ENCODE measurements at regions of chr18 and their contacts with region 1.

Region 1: GRCh38 chr18:9334329-9334972 is at the start of gene TWSG1:
- H3K4me3 Mint-ChIP-seq: peak within 1 kb of the TSS; percentile 87
- H3K27ac Mint-ChIP-seq: peak within 1 kb of the TSS; percentile 89
- H3K4me1 Mint-ChIP-seq: peaks cover 28% of the 10 kb centered on the region
- H3K27me3 Mint-ChIP-seq: peaks cover 5% of the 10 kb centered on the region

Region 2: GRCh38 chr18:8704361-8705279 is 629.8 kb before region 1 on chr18:
- intact Hi-C with region 1: loop called (anchors 10 kb)
- H3K4me3 Mint-ChIP-seq: peak overlapping the region; percentile 92
- H3K27ac Mint-ChIP-seq: peak overlapping the region; percentile 91
- H3K4me1 Mint-ChIP-seq: peaks cover 70% of the 10 kb centered on the region
- H3K27me3 Mint-ChIP-seq: peaks cover 51% of the 10 kb centered on the region

Region 3: GRCh38 chr18:9082711-9083510 is 251.5 kb before region 1 on chr18:
- intact Hi-C with region 1: loop called (anchors 10 kb)
- H3K4me3 Mint-ChIP-seq: peak overlapping the region; percentile 34
- H3K27ac Mint-ChIP-seq: peak overlapping the region; percentile 97
- H3K4me1 Mint-ChIP-seq: peaks cover 60% of the 10 kb centered on the region
- H3K27me3 Mint-ChIP-seq: no peaks in the 10 kb centered on the region

Region 4: GRCh38 chr18:9136315-9137155 is 197.9 kb before region 1 on chr18 and contains the start of gene ANKRD12:
- intact Hi-C with region 1: loop called (anchors 10 kb)
- H3K4me3 Mint-ChIP-seq: peak within 1 kb of the TSS; percentile 84
- H3K27ac Mint-ChIP-seq: peak within 1 kb of the TSS; percentile 98
- H3K4me1 Mint-ChIP-seq: peaks cover 33% of the 10 kb centered on the region
- H3K27me3 Mint-ChIP-seq: no peaks in the 10 kb centered on the region

Region 5: GRCh38 chr18:9474983-9475642 is 140.7 kb after region 1 on chr18 and contains the start of gene RALBP1:
- intact Hi-C with region 1: loop called (anchors 1 kb)
- H3K4me3 Mint-ChIP-seq: peak within 1 kb of the TSS; percentile 85
- H3K27ac Mint-ChIP-seq: peak within 1 kb of the TSS; percentile 94
- H3K4me1 Mint-ChIP-seq: peaks cover 33% of the 10 kb centered on the region
- H3K27me3 Mint-ChIP-seq: no peaks in the 10 kb centered on the region

Region 6: GRCh38 chr18:9494766-9495331 is 160.4 kb after region 1 on chr18:
- intact Hi-C with region 1: no loop called
- H3K4me3 Mint-ChIP-seq: no peak overlapping the region
- H3K27ac Mint-ChIP-seq: peak overlapping the region; percentile 37
- H3K4me1 Mint-ChIP-seq: peaks cover 22% of the 10 kb centered on the region
- H3K27me3 Mint-ChIP-seq: no peaks in the 10 kb centered on the region

Region 7: DNA sequence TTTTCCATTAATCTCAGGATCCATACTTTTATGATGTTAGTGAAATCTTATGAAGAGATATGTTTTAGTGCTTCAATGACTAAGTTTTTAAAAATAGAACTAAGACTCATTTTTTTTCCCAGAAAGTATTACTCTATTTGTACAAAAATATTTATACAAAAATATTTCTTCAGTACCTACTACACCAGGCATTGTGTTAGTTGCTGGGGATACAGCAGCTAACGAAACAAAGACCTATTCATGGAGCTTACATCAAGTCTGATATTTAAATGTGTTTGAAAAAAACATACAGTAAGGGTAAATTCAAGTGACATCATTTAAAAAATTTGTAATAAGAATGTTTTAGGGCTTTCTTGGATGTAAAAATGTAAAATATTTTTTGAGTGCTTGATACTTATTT is 590.9 kb after region 1 on chr18:
- intact Hi-C with region 1: no loop called
- H3K4me3 Mint-ChIP-seq: no peak overlapping the region
- H3K27ac Mint-ChIP-seq: no peak overlapping the region
- H3K4me1 Mint-ChIP-seq: peaks cover 19% of the 10 kb centered on the region
- H3K27me3 Mint-ChIP-seq: no peaks in the 10 kb centered on the region